Activated CD4-positive, alpha-beta memory T cell treated with anti-CD3 and anti-CD28 coated beads for 36 hours (primary cell): ENCODE measurements at regions of chr11 and their contacts with region 1.

Region 1: GRCh38 chr11:14764579-14765527 is 121.2 kb downstream of the PDE3B start:
- DNase-seq: peak; percentile 31
- H3K4me3 Mint-ChIP-seq: peak overlapping the region; percentile 48
- H3K27ac Mint-ChIP-seq: no peak overlapping the region
- H3K4me1 Mint-ChIP-seq: peaks cover 30% of the 10 kb centered on the region
- H3K27me3 Mint-ChIP-seq: no peaks in the 10 kb centered on the region

Region 2: GRCh38 chr11:14519917-14520746 is 244.7 kb before region 1 on chr11 and contains the start of gene PSMA1:
- CTCF ChIA-PET with region 1: interaction called, 6 read pairs
- POLR2A ChIA-PET with region 1: interaction called, 5 read pairs
- intact Hi-C with region 1: loop called (anchors 1 kb)
- DNase-seq: peak; percentile 97
- H3K4me3 Mint-ChIP-seq: peak within 1 kb of the TSS; percentile 96
- H3K27ac Mint-ChIP-seq: peak within 1 kb of the TSS; percentile 97
- H3K4me1 Mint-ChIP-seq: peaks cover 28% of the 10 kb centered on the region
- H3K27me3 Mint-ChIP-seq: no peaks in the 10 kb centered on the region
- total RNA-seq, gene PSMA1: 332 to 339 TPM

Region 3: GRCh38 chr11:14578541-14578956 is 186.3 kb before region 1 on chr11:
- CTCF ChIA-PET with region 1: no interaction called
- POLR2A ChIA-PET with region 1: no interaction called
- intact Hi-C with region 1: loop called (anchors 1 kb)
- DNase-seq: peak; percentile 66
- H3K4me3 Mint-ChIP-seq: peak overlapping the region; percentile 54
- H3K27ac Mint-ChIP-seq: peak overlapping the region; percentile 86
- H3K4me1 Mint-ChIP-seq: peaks cover 49% of the 10 kb centered on the region
- H3K27me3 Mint-ChIP-seq: no peaks in the 10 kb centered on the region

Region 4: DNA sequence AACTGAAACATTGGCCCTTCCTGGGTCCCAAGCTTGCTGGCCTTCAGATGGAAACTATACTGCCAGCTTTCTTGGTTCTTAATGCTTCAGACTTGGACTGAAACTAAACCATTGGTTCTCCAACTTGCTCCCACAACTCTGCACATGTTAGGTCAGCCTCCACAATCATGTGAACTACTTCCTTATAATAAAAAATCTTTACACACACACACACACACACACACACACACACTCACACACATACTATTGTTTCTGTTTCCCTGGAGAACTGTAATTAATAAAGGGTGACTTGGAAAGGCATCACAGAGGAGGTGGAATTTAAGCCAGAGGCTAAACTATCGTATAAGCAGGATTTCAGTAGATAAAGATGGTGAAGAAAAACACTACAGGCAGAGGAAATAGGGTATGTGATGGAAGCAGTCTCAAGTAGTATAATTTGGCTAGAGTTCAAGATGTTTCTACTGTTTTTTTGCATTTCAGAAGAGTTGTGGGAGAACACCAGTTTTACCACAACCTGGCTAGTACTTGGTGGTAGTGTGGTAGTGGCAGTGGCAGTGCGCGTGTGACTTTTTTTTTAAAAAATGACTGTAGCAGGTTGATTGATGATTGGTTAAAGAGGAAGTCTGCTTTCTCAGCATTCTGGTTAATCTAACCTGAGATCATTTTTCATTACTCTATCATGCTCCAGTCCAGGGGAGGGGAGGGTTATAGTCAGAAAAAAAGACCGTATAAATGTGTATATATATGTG is 51.2 kb before region 1 on chr11:
- CTCF ChIA-PET with region 1: no interaction called
- POLR2A ChIA-PET with region 1: no interaction called
- intact Hi-C with region 1: loop called (anchors 5 kb)
- DNase-seq: peak; percentile 40
- H3K4me3 Mint-ChIP-seq: peak overlapping the region; percentile 2
- H3K27ac Mint-ChIP-seq: peak overlapping the region; percentile 61
- H3K4me1 Mint-ChIP-seq: peaks cover 38% of the 10 kb centered on the region
- H3K27me3 Mint-ChIP-seq: no peaks in the 10 kb centered on the region

Region 5: GRCh38 chr11:15053191-15053685 is 288.4 kb after region 1 on chr11:
- CTCF ChIA-PET with region 1: no interaction called
- POLR2A ChIA-PET with region 1: no interaction called
- intact Hi-C with region 1: loop called (anchors 10 kb)
- DNase-seq: peak; percentile 56
- H3K4me3 Mint-ChIP-seq: no peak overlapping the region
- H3K27ac Mint-ChIP-seq: peak overlapping the region; percentile 61
- H3K4me1 Mint-ChIP-seq: peaks cover 19% of the 10 kb centered on the region
- H3K27me3 Mint-ChIP-seq: peaks cover 3% of the 10 kb centered on the region